ENCODE measurements at regions of chr1 and their contacts with region 1.

Region 1: DNA sequence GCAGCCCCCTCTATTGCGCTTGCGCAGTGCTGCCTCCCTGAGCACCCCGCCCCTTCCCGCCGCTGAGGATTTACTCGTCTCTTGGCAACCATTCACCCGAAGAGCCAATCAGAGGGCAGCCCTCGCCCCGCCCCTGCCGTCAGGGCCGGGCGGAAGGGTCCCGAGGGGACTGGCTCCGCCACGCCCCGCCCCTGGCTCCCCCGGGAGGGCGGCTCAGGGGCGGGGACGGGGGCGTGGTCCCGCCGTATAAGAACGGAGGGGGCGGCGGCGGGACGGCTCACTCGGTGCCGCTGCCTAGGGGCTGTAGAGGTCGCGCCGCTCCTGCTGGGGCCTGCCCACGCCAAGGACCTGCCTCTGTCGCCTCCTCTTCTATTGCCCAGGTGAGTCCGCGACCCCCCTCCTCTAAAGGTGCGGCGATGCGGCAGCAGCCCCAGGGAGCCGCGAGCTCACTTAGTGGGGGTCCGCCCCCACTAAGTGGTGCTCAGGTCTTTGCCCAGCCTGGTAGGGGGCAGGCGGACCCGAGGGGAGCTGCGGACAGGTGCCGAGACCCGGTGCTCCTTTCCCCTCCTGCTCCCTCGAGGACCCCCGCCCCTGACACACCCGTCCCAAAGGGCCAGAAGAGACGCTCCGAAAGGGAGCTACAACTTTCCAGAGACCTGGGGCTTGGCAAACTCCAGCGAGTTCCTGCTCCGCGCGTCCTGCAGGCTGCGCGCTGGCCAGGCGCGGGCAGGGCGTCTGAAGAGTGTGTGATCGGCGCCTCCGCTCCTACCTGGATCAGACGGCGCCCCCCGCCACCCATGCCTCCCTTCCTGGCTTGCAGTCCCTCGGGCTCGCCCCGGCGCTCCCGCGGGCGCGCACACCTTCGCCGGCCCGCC is at the start of gene TENT5C:
- DNase-seq: peak; percentile 96 to 99
- H3K4me3 ChIP-seq: peak within 1 kb of the TSS; percentile 71
- H3K27ac ChIP-seq: peak within 1 kb of the TSS; percentile 39
- H3K4me1 ChIP-seq: peaks cover 14% of the 10 kb centered on the region
- H3K27me3 ChIP-seq: no peaks in the 10 kb centered on the region
- CTCF ChIP-seq: peak; percentile 24; the same call in 1 of the 2 replicates
- total RNA-seq, gene TENT5C: 3.9 and 4.3 TPM in 2 replicates

Region 2: GRCh38 chr1:116833718-116834117 is 772.3 kb before region 1 on chr1:
- CTCF ChIA-PET with region 1: no interaction called
- POLR2A ChIA-PET with region 1: no interaction called
- intact Hi-C with region 1: no loop called
- DNase-seq: no peak
- H3K4me3 ChIP-seq: no peak overlapping the region
- H3K27ac ChIP-seq: no peak overlapping the region
- H3K4me1 ChIP-seq: no peaks in the 10 kb centered on the region
- H3K27me3 ChIP-seq: no peaks in the 10 kb centered on the region
- CTCF ChIP-seq: no peak

Region 3: GRCh38 chr1:117121776-117122697 is 484.0 kb before region 1 on chr1:
- CTCF ChIA-PET with region 1: no interaction called
- POLR2A ChIA-PET with region 1: no interaction called
- intact Hi-C with region 1: loop called (anchors 5 kb)
- DNase-seq: peak; percentile 95 to 98
- H3K4me3 ChIP-seq: peak overlapping the region; percentile 62; the same call in 1 of the 2 replicates
- H3K27ac ChIP-seq: peak overlapping the region; percentile 23; the same call in 1 of the 2 replicates
- H3K4me1 ChIP-seq: peaks cover 7% of the 10 kb centered on the region
- H3K27me3 ChIP-seq: no peaks in the 10 kb centered on the region
- CTCF ChIP-seq: peak; percentile 83

Region 4: DNA sequence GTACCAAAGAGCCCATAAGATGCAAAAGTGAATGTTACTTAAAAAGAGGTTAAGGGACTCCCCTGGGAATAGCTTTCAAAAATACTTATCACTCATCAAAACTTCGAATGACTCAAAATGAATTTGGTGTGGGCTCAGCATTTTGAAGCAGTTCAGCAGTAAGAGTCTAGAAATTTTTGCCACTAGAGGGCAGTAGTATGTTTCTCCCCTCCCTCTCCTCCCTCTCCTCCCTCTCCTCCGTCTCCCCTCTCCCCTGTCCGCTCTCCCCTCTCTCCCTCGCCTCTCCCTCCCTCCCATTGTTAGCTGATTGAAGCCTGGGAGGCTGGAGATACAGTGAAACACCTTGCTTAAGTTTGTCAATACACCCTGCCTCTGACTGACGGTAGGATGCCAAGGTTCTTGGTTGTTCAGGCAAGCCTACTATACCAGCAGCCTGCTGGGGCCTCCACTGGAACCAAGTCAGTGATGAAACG is 71.0 kb before region 1 on chr1:
- CTCF ChIA-PET with region 1: interaction called, 6 read pairs
- POLR2A ChIA-PET with region 1: interaction called, 3 read pairs
- intact Hi-C with region 1: loop called (anchors 2 kb)
- DNase-seq: peak; percentile 33 to 60
- H3K4me3 ChIP-seq: no peak overlapping the region
- H3K27ac ChIP-seq: no peak overlapping the region
- H3K4me1 ChIP-seq: peaks cover 17% of the 10 kb centered on the region
- H3K27me3 ChIP-seq: no peaks in the 10 kb centered on the region
- CTCF ChIP-seq: peak; percentile 90

Region 5: DNA sequence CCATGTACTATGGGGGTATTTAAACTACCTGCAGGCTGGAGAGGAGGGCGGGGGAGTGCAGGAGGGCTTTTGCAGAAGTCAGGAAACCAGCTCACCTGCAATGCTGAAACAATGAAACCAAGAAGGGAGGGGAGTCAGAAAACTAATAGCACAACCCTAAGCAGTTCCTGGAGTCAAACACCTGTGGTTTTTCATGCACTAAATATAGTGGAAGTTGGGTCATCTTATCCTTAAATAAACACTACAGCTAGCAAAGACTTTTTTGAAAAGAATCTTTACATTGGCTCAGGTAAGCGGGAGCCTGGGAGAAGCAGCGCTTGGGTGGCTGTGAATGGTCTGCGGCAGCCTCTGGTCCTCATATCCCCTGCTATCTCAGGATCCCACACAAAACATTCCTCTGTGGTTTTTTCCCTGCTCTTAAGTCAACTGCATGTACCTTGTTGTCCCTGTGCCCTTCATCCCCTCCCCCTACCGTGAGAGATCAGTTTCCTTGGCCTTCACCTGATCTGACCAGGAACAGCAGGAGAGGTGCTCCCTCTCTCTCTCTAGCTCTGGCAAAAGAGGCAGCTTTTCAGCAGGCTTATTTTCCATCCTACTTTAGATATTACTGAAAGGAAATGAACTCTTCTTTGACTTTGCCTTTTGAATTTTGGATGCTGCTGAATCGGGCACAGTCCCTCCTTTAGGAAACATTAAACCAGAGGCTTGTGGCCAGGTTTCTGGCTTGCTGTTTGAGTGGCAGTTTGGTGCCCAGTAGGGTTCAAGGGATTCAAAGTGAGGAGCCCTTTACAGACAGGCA is 26.5 kb after region 1 on chr1:
- CTCF ChIA-PET with region 1: no interaction called
- POLR2A ChIA-PET with region 1: no interaction called
- intact Hi-C with region 1: loop called (anchors 2 kb)
- DNase-seq: peak; percentile 54 to 91
- H3K4me3 ChIP-seq: no peak overlapping the region; the same call in 1 of the 2 replicates
- H3K27ac ChIP-seq: peak overlapping the region; percentile 30; the same call in 1 of the 2 replicates
- H3K4me1 ChIP-seq: peaks cover 23% of the 10 kb centered on the region
- H3K27me3 ChIP-seq: no peaks in the 10 kb centered on the region
- CTCF ChIP-seq: no peak

Region 6: DNA sequence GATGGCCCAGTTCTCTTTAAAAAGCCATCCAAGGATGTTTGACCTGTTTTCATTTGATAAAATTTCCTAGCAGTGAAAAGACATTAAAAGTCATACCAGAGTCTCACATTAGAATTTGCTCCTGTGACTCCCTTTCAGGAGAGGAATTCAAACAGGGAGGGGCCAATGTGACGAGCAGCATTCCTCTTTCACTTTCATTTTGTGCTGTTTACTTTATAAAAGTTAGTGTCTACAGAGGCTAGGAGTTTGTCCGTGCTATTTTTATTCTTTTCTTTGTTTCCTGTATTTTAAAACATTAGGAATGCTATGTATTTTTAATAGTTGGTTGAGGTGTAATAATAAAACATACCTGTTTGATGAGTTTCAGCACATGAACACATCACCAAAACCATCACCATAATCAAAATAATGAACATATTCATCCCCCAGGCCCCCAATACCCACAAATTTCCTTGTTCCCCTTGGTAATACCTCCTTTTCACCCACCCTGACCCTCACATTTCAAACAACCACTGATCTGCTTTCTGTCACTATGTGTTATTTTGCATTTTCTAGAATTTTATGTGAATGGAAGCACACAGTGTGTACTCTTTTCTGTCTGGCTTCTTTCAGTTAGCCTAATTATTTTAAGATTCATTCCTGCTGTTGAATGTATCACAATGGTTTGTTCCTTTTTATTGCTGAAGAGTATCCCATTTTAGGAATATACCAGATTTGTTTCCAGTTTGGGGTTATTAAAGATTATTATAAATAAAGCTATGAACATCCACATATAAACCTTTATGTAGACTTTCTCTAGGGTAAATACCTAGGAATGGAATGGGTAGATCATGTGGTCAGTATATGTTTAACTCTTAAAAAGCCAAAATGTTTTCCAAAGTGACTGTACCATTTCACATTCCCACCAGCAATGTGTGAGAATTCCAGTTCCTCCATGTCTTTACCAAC is 129.3 kb after region 1 on chr1:
- CTCF ChIA-PET with region 1: no interaction called
- POLR2A ChIA-PET with region 1: no interaction called
- intact Hi-C with region 1: loop called (anchors 1 kb)
- DNase-seq: peak; percentile 15 to 59
- H3K4me3 ChIP-seq: peak overlapping the region; percentile 46; the same call in 1 of the 2 replicates
- H3K27ac ChIP-seq: no peak overlapping the region
- H3K4me1 ChIP-seq: peaks cover 11% of the 10 kb centered on the region; the same call in 1 of the 2 replicates
- H3K27me3 ChIP-seq: no peaks in the 10 kb centered on the region
- CTCF ChIP-seq: no peak